Thyroid gland (tissue), 4 donors: ENCODE measurements at regions of chr14 and their contacts with region 1.

Region 1: GRCh38 chr14:64914237-64914971 is at the start of gene CHURC1:
- DNase-seq: peak; percentile 100
- H3K4me3 ChIP-seq: peak within 1 kb of the TSS; percentile 27 to 91 (median 91)
- H3K27ac ChIP-seq: peak within 1 kb of the TSS; percentile 52 to 95 (median 86)
- H3K4me1 ChIP-seq: peaks cover 17 to 25% of the 10 kb centered on the region in 2 donors
- H3K27me3 ChIP-seq: no peaks in the 10 kb centered on the region
- CTCF ChIP-seq: no peak
- POLR2A ChIP-seq: peak; percentile 20 to 89
- total RNA-seq, gene CHURC1: 63.7 to 90.2 (median 71.7) TPM

Region 2: GRCh38 chr14:64986578-64987571 is 72.5 kb after region 1 on chr14 and contains the start of gene FNTB:
- intact Hi-C with region 1: loop called (anchors 10 kb)
- DNase-seq: peak; percentile 96 to 98
- H3K4me3 ChIP-seq: peak within 1 kb of the TSS; percentile 62 to 82 (median 74)
- H3K27ac ChIP-seq: peak within 1 kb of the TSS; percentile 62 to 95 (median 95)
- H3K4me1 ChIP-seq: peaks cover 9 to 21% of the 10 kb centered on the region in 2 donors
- H3K27me3 ChIP-seq: no peaks in the 10 kb centered on the region
- CTCF ChIP-seq: peak; percentile 47 to 75 (median 70)
- POLR2A ChIP-seq: peak in 1 of 2 donors; percentile 63
- total RNA-seq, gene FNTB: 7.8 to 27.0 (median 18.8) TPM